ENCODE measurements at regions of chr1 and their contacts with region 1.

Region 1: GRCh38 chr1:35769759-35770446 is at the start of gene CLSPN:
- DNase-seq: peak; percentile 98
- H3K4me3 Mint-ChIP-seq: peak within 1 kb of the TSS; percentile 98
- H3K27ac Mint-ChIP-seq: peak within 1 kb of the TSS; percentile 97
- H3K4me1 Mint-ChIP-seq: peaks cover 8% of the 10 kb centered on the region
- H3K27me3 Mint-ChIP-seq: no peaks in the 10 kb centered on the region
- total RNA-seq, gene CLSPN: 48.9 to 51.8 TPM

Region 2: DNA sequence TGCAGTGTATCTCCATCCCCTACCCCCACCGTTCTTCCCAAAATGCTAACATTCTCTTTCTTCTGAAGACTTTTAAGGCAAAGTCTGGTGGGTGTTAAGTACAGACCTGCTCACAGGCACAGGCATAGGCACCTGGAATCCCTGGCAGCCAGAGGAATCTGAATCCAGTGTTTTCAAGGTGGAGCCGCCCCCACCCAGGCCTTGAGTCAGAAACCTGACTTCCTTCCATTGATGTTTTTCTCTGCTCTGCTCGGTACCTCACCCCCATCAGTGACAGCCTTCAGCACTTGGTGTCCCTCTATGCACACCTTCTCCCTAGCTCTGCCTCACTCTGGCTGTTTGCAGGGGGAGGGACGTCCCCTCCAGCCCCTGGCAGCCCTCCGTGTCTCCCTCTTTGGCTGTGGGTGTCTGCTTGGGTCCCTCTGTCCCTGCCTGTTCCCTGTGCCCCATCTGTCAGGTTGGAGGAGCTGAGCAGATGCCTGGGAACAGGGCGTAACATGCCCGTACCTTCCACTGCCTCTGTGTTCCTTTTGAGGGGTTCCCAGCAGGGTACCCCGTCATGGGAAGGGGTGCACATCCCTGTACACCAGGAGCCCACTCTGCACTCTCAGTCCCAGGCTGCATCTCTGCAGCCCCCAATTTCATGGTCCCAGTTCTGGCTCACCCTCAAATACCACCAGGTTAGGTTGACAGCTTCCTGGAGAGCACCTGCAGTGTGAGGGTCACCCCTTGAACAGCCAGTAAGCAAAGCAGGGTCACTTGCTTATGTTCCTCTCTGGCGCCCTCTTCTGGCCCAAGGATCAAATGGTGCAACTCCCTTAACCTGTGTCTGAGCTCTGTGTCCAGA is 205.6 kb before region 1 on chr1:
- CTCF ChIA-PET with region 1: interaction called, 14 read pairs
- intact Hi-C with region 1: loop called (anchors 1 kb)
- DNase-seq: peak; percentile 92
- H3K4me3 Mint-ChIP-seq: no peak overlapping the region
- H3K27ac Mint-ChIP-seq: no peak overlapping the region
- H3K4me1 Mint-ChIP-seq: peaks cover 16% of the 10 kb centered on the region
- H3K27me3 Mint-ChIP-seq: no peaks in the 10 kb centered on the region

Region 3: GRCh38 chr1:35641233-35641866 is 128.6 kb before region 1 on chr1 and contains the start of gene PSMB2:
- CTCF ChIA-PET with region 1: interaction called, 3 read pairs
- intact Hi-C with region 1: loop called (anchors 1 kb)
- DNase-seq: peak; percentile 98
- H3K4me3 Mint-ChIP-seq: peak within 1 kb of the TSS; percentile 100
- H3K27ac Mint-ChIP-seq: peak within 1 kb of the TSS; percentile 99
- H3K4me1 Mint-ChIP-seq: peaks cover 30% of the 10 kb centered on the region
- H3K27me3 Mint-ChIP-seq: peaks cover 5% of the 10 kb centered on the region
- total RNA-seq, gene PSMB2: 91.9 to 96.4 TPM

Region 4: DNA sequence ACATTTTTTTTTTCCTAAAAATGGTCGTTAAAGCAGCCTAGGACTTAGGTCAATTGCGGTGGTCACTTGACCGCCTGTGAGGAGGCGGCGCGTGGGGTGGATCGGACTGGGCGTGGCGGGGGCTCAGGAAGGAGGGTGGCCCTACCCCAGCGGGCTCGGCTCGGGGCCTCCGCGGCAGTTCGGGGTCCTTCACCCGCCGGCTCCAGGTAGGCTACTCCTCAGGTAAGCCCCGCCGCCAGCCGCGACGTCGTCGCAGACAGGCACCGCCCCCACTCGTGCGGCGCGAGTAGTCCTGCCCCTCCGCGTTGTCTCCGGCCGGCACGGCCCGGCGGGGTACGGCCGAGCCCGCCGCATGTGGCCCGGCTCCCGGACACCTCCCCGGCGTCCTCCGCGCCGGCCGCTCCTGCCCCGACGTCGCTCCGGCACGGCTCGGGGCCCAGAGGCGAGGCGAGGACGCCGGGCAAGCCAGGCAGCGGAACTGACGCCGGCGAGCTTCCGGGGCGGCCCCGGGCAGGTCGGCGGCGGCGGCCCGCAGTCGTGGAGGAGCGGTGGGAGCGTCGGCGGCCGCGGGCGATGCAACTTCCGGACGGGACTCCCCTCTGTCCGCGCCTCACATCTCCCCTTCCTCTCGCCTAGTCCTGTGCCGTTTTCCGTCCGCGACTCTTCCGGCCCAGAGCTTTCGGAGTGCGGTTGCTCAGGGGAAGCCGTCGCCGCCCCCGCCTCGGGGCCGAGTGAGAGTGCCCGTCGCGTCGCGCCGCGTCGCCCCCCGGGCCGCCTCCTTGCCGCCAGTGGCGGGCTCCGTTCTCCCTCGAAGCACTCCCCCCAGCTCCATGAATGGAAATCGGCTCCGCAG is 160.9 kb after region 1 on chr1 and contains the start of gene AGO3:
- CTCF ChIA-PET with region 1: no interaction called
- intact Hi-C with region 1: loop called (anchors 1 kb)
- DNase-seq: peak; percentile 92
- H3K4me3 Mint-ChIP-seq: peak within 1 kb of the TSS; percentile 94
- H3K27ac Mint-ChIP-seq: peak within 1 kb of the TSS; percentile 90
- H3K4me1 Mint-ChIP-seq: peaks cover 35% of the 10 kb centered on the region
- H3K27me3 Mint-ChIP-seq: no peaks in the 10 kb centered on the region
- total RNA-seq, gene AGO3: 25.1 to 28.2 TPM